ENCODE measurements at regions of chr9 and their contacts with region 1.

Region 1: GRCh38 chr9:113876151-113876992 is at the start of gene ZNF618:
- DNase-seq: peak in 5 of 9 experiments; percentile 6 to 52 (median 47)
- ATAC-seq: peak; percentile 58
- H3K4me3 ChIP-seq: peak within 1 kb of the TSS; percentile 66 to 67
- H3K4me3 Mint-ChIP-seq: peak within 1 kb of the TSS; percentile 91
- H3K27ac ChIP-seq: no peak within 1 kb of the TSS
- H3K27ac Mint-ChIP-seq: no peak within 1 kb of the TSS
- H3K4me1 ChIP-seq: no peaks in the 10 kb centered on the region
- H3K4me1 Mint-ChIP-seq: peaks cover 5% of the 10 kb centered on the region
- H3K27me3 ChIP-seq: peaks cover 0 to 3% of the 10 kb centered on the region in 2 experiments
- H3K27me3 Mint-ChIP-seq: peaks cover 12% of the 10 kb centered on the region
- CTCF ChIP-seq: no peak
- total RNA-seq, gene ZNF618: 0.67 to 1.1 TPM

Region 2: GRCh38 chr9:113340017-113340699 is 536.2 kb before region 1 on chr9 and contains the start of gene WDR31:
- CTCF ChIA-PET with region 1: no interaction called
- POLR2A ChIA-PET with region 1: no interaction called
- intact Hi-C with region 1: no loop called
- DNase-seq: peak; percentile 58 to 90 (median 78)
- ATAC-seq: peak; percentile 99
- H3K4me3 ChIP-seq: peak within 1 kb of the TSS; percentile 70 to 83
- H3K4me3 Mint-ChIP-seq: peak within 1 kb of the TSS; percentile 83
- H3K27ac ChIP-seq: peak within 1 kb of the TSS in 1 of 2 experiments; percentile 46
- H3K27ac Mint-ChIP-seq: no peak within 1 kb of the TSS
- H3K4me1 ChIP-seq: peaks cover 19% of the 10 kb centered on the region
- H3K4me1 Mint-ChIP-seq: peaks cover 24% of the 10 kb centered on the region
- H3K27me3 ChIP-seq: peaks cover 0 to 3% of the 10 kb centered on the region in 2 experiments
- H3K27me3 Mint-ChIP-seq: peaks cover 2% of the 10 kb centered on the region
- CTCF ChIP-seq: no peak
- total RNA-seq, gene WDR31: 0.11 to 0.43 TPM

Region 3: GRCh38 chr9:113682297-113682771 is 194.0 kb before region 1 on chr9:
- CTCF ChIA-PET with region 1: no interaction called
- POLR2A ChIA-PET with region 1: no interaction called
- intact Hi-C with region 1: loop called in 1 of 2 experiments (anchors 5 kb)
- DNase-seq: peak in 6 of 9 experiments; percentile 26 to 56 (median 46)
- ATAC-seq: no peak
- H3K4me3 ChIP-seq: no peak overlapping the region
- H3K4me3 Mint-ChIP-seq: no peak overlapping the region
- H3K27ac ChIP-seq: no peak overlapping the region
- H3K27ac Mint-ChIP-seq: no peak overlapping the region
- H3K4me1 ChIP-seq: peaks cover 2% of the 10 kb centered on the region
- H3K4me1 Mint-ChIP-seq: no peaks in the 10 kb centered on the region
- H3K27me3 ChIP-seq: peaks cover 0 to 12% of the 10 kb centered on the region in 2 experiments
- H3K27me3 Mint-ChIP-seq: peaks cover 61% of the 10 kb centered on the region
- CTCF ChIP-seq: peak; percentile 76

Region 4: DNA sequence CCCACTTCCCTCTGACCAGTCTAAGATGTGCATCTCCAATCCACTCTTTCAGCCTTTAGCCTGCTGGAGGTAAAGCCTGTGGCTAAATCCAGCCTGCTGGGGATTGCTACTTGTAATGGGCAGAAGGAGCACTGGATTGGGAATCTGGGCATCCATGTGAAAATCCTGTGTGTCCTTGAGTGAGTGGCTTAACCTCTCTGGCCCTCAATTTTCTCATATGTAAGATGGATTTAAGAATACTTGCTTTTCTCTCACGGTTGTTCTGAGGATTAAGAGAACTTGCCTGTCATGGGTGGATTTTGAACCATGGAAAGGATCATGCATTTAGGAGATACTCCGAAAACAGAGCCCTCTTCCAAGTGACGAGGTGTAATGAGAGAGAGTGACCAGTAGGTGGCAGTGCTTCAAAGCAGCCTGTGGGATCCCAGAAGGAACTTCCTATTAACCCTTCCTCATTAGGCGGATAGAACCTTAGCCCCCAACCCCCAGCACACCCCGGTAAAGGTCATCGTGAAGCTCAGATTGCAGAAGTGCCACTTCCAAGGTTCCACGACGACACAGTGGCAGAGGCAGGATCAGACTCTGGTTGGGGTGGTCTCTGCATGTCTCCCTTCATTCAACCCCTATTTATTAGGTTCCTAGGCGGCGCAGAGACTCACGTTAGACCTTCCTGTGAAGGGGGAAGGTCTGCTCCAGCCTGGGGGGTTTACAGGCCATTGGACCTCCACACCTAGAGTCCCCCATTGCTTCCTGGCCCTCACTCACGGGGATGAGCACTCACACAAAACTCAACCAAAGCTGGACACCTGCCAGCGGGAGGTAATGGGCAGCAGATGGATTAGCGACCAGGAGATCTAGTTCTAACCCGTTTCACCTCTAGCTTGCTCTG is 69.0 kb before region 1 on chr9:
- CTCF ChIA-PET with region 1: interaction called, 4 read pairs
- POLR2A ChIA-PET with region 1: no interaction called
- intact Hi-C with region 1: loop called in 1 of 2 experiments (anchors 1 kb)
- DNase-seq: peak in 7 of 9 experiments; percentile 3 to 58 (median 22)
- ATAC-seq: no peak
- H3K4me3 ChIP-seq: no peak overlapping the region
- H3K4me3 Mint-ChIP-seq: no peak overlapping the region
- H3K27ac ChIP-seq: no peak overlapping the region
- H3K27ac Mint-ChIP-seq: no peak overlapping the region
- H3K4me1 ChIP-seq: peaks cover 4% of the 10 kb centered on the region
- H3K4me1 Mint-ChIP-seq: peaks cover 3% of the 10 kb centered on the region
- H3K27me3 ChIP-seq: no peaks in the 10 kb centered on the region
- H3K27me3 Mint-ChIP-seq: peaks cover 11% of the 10 kb centered on the region
- CTCF ChIP-seq: peak; percentile 79

Region 5: DNA sequence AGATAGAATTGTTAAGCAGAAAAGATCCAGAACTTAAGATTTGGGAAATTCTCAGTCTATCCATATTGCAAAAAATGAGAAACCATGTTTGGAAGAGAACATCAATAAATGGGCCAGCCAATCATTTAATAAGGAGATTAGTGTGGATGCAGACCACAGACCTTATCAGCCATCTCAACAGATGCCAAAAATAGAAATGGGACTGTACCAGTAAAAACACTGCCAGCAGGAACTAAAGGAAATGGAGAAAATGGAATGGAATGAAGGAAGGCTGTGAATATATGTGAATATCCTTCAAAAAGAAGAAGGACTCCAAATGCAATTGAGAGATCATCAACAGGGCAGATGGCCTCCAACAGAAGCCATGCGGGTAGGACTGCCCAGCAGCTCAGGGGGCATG is 53.0 kb before region 1 on chr9:
- CTCF ChIA-PET with region 1: no interaction called
- POLR2A ChIA-PET with region 1: no interaction called
- intact Hi-C with region 1: no loop called
- DNase-seq: no peak
- ATAC-seq: no peak
- H3K4me3 ChIP-seq: no peak overlapping the region
- H3K4me3 Mint-ChIP-seq: no peak overlapping the region
- H3K27ac ChIP-seq: no peak overlapping the region
- H3K27ac Mint-ChIP-seq: no peak overlapping the region
- H3K4me1 ChIP-seq: no peaks in the 10 kb centered on the region
- H3K4me1 Mint-ChIP-seq: peaks cover 5% of the 10 kb centered on the region
- H3K27me3 ChIP-seq: no peaks in the 10 kb centered on the region
- H3K27me3 Mint-ChIP-seq: peaks cover 20% of the 10 kb centered on the region
- CTCF ChIP-seq: no peak